Left cardiac atrium (tissue), 4 donors: ENCODE measurements at regions of chr1 and their contacts with region 1.

Region 1: DNA sequence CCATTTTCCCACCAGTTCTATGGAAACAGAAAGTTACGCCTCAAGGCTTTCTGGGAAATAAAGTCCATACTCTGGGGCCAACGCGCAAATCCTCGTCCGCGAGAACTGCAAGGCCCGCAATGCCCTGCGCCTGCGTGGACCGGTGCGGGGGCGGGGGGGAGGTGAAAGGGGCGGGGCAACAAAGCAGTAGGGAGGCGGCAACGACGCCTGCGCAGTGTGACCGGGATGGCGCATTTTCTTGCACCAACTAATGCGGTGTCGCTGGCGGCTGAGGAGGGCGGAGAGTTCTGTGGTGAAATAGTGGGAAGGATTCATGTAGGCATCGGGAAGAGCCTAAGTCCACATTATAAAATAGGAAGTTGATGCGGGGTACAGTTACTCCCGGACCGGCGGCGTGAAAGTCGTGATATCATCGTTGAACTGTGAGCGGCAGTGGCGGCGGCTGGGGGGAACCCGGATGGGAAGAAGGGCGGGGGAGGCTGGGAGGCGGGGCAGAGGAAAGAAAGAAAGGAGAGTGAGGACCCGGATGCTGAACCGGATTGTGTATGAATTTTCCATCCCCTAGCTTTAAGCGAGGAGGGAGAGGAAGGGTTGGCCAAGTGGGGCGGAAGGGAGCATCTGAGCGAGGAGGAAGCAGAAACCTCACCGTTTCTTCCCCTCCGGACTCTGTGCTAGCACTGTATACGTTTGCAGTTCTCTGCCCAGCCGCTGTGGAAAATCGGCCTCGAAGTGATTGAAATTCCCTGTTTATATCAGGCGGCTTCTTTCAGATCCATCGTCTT is at the start of gene GGPS1:
- DNase-seq: peak; percentile 97
- ATAC-seq: peak; percentile 92 to 93
- total RNA-seq, gene GGPS1: 25.1 to 28.4 TPM

Region 2: GRCh38 chr1:235304549-235305451 is 23.7 kb before region 1 on chr1:
- intact Hi-C with region 1: no loop called
- DNase-seq: no peak
- ATAC-seq: peak; percentile 30 to 58

Region 3: GRCh38 chr1:235415008-235415904 is 86.7 kb after region 1 on chr1:
- intact Hi-C with region 1: loop called in 1 of 2 experiments (anchors 5 kb)
- DNase-seq: peak; percentile 58
- ATAC-seq: peak; percentile 64 to 75